Aorta (tissue), 5 donors: ENCODE measurements at regions of chr2 and their contacts with region 1.

Region 1: DNA sequence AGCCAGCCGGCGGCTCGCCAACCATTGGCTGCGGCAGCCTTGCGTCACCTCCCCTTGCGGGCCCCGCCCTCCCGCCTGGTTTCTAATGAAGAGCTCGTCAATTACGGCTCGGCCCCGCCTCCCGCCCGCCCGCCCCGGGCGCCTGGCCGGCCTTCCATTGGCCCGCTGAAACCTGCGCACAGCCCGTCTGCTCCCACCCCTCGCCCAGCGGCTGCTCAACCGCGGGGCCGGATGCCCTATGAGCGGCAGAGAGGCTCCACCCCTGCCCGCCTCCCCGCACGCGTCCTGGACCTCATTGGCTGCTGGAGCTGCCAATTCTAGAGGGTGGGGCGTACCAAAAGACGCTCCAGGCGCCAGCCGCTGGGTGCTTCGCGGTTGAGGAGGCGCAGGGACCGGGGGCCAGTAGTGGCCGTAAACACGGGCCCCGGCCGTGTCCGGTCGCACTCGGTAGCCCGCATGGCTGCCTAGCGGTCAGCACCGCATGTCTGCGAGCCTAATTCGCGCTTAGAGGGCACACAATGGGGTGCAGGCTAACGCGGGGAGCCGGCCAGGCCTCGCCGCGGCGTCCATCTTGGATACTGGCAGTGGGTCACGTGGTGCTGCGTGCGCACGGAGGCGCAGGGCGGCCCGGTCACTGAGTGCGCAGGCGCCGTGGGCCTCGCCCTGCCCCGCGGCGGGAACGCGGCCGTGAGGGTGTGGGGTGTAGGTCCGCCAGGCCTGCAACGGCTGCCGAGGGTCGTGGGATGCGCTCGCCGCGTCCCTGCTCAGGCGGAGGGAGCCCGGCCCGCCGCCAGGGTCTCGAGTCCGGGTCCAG is 454 bp upstream of the HDAC4 start:
- DNase-seq: peak; percentile 99 to 100
- ATAC-seq: peak; percentile 99
- H3K4me3 ChIP-seq: peak overlapping the region; percentile 45 to 56
- H3K27ac ChIP-seq: peak overlapping the region; percentile 95 to 98
- H3K4me1 ChIP-seq: no peaks in the 10 kb centered on the region
- H3K27me3 ChIP-seq: no peaks in the 10 kb centered on the region

Region 2: GRCh38 chr2:239143858-239144718 is 257.2 kb before region 1 on chr2:
- intact Hi-C with region 1: loop called in 1 of 2 experiments (anchors 10 kb)
- DNase-seq: no peak
- ATAC-seq: peak; percentile 39
- H3K4me3 ChIP-seq: no peak overlapping the region
- H3K27ac ChIP-seq: no peak overlapping the region
- H3K4me1 ChIP-seq: no peaks in the 10 kb centered on the region
- H3K27me3 ChIP-seq: no peaks in the 10 kb centered on the region

Region 3: DNA sequence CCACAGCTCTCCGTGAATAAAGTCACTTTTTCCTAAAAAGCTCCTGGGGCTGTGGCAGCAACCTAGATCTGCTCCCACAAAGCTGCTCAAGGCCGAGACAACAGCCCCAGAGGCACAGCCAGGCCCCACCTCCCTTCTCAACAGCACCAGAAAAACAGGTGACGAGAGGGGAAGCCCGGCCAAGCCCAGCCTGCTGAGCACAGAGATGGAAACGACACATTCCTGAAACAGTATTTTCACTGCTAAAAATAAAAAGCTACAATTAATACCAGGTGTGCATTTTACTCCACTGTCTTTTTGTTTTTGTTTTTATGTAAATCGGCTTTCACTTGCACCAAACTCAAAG is 199.8 kb before region 1 on chr2:
- intact Hi-C with region 1: loop called in 1 of 2 experiments (anchors 1 kb)
- DNase-seq: peak; percentile 71 to 73
- ATAC-seq: peak; percentile 40
- H3K4me3 ChIP-seq: no peak overlapping the region
- H3K27ac ChIP-seq: peak overlapping the region in 1 of 2 donors; percentile 31
- H3K4me1 ChIP-seq: no peaks in the 10 kb centered on the region
- H3K27me3 ChIP-seq: no peaks in the 10 kb centered on the region

Region 4: GRCh38 chr2:239223310-239224198 is 177.7 kb before region 1 on chr2:
- intact Hi-C with region 1: loop called (anchors 5 to 10 kb)
- DNase-seq: peak; percentile 75 to 89
- ATAC-seq: peak; percentile 53
- H3K4me3 ChIP-seq: no peak overlapping the region
- H3K27ac ChIP-seq: peak overlapping the region; percentile 87 to 92
- H3K4me1 ChIP-seq: peaks cover 0 to 2% of the 10 kb centered on the region in 2 donors
- H3K27me3 ChIP-seq: no peaks in the 10 kb centered on the region

Region 5: GRCh38 chr2:239326831-239327535 is 74.3 kb before region 1 on chr2:
- intact Hi-C with region 1: loop called in 1 of 2 experiments (anchors 5 kb)
- DNase-seq: no peak
- ATAC-seq: no peak
- H3K4me3 ChIP-seq: no peak overlapping the region
- H3K27ac ChIP-seq: no peak overlapping the region
- H3K4me1 ChIP-seq: no peaks in the 10 kb centered on the region
- H3K27me3 ChIP-seq: no peaks in the 10 kb centered on the region

Region 6: GRCh38 chr2:239339726-239340601 is 61.3 kb before region 1 on chr2:
- intact Hi-C with region 1: no loop called
- DNase-seq: no peak
- ATAC-seq: no peak
- H3K4me3 ChIP-seq: no peak overlapping the region
- H3K27ac ChIP-seq: no peak overlapping the region
- H3K4me1 ChIP-seq: no peaks in the 10 kb centered on the region
- H3K27me3 ChIP-seq: no peaks in the 10 kb centered on the region

Region 7: DNA sequence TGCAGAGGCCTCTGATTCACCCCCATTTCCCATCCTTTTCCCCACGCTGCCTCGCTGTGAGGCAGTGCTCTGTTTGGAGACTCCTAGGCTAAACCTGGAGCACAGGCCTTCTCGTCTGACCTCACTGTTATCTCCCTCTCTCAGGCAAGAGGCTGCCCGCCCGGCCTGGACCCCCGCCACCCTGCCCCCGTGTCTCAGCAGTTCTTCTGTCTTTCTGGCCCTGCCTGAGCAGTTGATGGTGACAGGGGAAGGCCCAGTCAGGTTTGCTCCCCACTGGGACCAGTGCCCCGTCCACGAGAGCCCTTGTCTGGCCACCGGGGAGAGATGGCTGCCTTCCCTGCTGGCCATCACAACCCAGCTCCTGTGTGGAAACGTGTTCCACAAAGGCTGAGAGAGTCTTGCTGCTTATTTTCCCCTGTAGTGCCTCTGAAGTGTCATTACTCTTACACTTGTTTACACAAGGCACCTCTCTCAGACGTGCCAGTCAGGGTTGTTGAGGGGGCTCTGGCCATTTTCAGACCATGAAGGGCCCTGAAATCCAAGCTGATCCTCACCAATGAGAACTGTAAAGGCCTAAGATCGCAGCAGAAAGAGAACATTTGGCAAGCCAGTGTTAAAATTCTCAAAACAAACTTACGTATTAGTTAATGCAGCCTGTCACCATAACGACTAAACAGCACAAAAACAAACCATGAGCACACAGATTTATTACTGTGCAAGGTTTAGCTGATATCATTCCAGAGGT is 413.0 kb after region 1 on chr2:
- intact Hi-C with region 1: loop called (anchors 5 kb)
- DNase-seq: peak; percentile 44 to 81
- ATAC-seq: peak; percentile 75
- H3K4me3 ChIP-seq: no peak overlapping the region
- H3K27ac ChIP-seq: peak overlapping the region; percentile 94 to 100
- H3K4me1 ChIP-seq: no peaks in the 10 kb centered on the region
- H3K27me3 ChIP-seq: no peaks in the 10 kb centered on the region

Region 8: GRCh38 chr2:239882331-239882732 is 481.1 kb after region 1 on chr2:
- intact Hi-C with region 1: loop called (anchors 2 to 10 kb)
- DNase-seq: no peak
- ATAC-seq: peak; percentile 83
- H3K4me3 ChIP-seq: no peak overlapping the region
- H3K27ac ChIP-seq: no peak overlapping the region
- H3K4me1 ChIP-seq: no peaks in the 10 kb centered on the region
- H3K27me3 ChIP-seq: no peaks in the 10 kb centered on the region